Astrocyte of the cerebellum (primary cell): ENCODE measurements at regions of chr3 and their contacts with region 1.

Region 1: DNA sequence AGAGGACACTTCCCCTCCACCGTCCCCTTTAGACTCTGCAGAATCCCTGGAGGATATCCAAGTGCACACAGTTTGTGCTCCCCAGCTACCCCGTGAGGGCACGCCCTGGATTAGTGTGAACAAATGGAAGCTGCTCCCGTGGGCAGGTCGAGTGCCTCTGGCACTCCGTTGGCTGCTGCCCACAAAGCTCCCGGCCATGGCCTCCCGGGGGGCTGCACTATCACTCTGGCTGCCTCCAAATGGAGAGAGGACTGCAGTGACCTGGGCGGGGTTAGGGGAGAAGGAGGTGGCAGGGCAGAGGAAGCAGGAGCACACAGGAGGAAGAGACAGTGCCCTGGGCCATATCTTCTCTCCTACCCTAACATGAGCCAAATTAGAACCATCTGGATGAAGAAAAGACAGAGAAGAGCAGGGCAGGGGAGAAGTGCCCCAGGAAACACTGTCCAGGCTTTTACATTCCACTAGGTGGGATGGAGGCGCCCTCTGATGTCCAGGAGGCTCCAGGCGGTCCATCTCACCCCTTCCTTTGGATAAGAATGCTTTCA is 29.4 kb upstream of the ACAD9 start:
- DNase-seq: no peak
- H3K4me3 ChIP-seq: no peak overlapping the region
- CTCF ChIP-seq: peak; percentile 48

Region 2: GRCh38 chr3:128617557-128618397 is 232.2 kb before region 1 on chr3:
- in situ Hi-C with region 1: loop called (anchors 5 kb)
- DNase-seq: peak; percentile 91
- H3K4me3 ChIP-seq: peak overlapping the region; percentile 74
- CTCF ChIP-seq: peak; percentile 81

Region 3: GRCh38 chr3:128683957-128684356 is 166.0 kb before region 1 on chr3:
- in situ Hi-C with region 1: no loop called
- DNase-seq: no peak
- H3K4me3 ChIP-seq: no peak overlapping the region
- CTCF ChIP-seq: no peak